ENCODE measurements at regions of chr14 and their contacts with region 1.

Region 1: GRCh38 chr14:98685725-98686124 is 586.3 kb downstream of the BCL11B start:
- DNase-seq: no peak
- H3K4me3 ChIP-seq: no peak overlapping the region
- H3K27ac ChIP-seq: no peak overlapping the region
- H3K4me1 ChIP-seq: peaks cover 0 to 9% (median 0%) of the 10 kb centered on the region in 4 donors
- H3K27me3 ChIP-seq: no peaks in the 10 kb centered on the region
- CTCF ChIP-seq: no peak
- EP300 ChIP-seq: no peak
- POLR2A ChIP-seq: no peak

Region 2: GRCh38 chr14:98608071-98609060 is 77.4 kb before region 1 on chr14:
- intact Hi-C with region 1: no loop called
- DNase-seq: no peak
- H3K4me3 ChIP-seq: no peak overlapping the region
- H3K27ac ChIP-seq: no peak overlapping the region
- H3K4me1 ChIP-seq: no peaks in the 10 kb centered on the region
- H3K27me3 ChIP-seq: no peaks in the 10 kb centered on the region
- CTCF ChIP-seq: no peak
- EP300 ChIP-seq: no peak
- POLR2A ChIP-seq: no peak

Region 3: GRCh38 chr14:98622208-98623051 is 63.3 kb before region 1 on chr14:
- intact Hi-C with region 1: no loop called
- DNase-seq: no peak
- H3K4me3 ChIP-seq: no peak overlapping the region
- H3K27ac ChIP-seq: no peak overlapping the region
- H3K4me1 ChIP-seq: no peaks in the 10 kb centered on the region
- H3K27me3 ChIP-seq: no peaks in the 10 kb centered on the region
- CTCF ChIP-seq: no peak
- EP300 ChIP-seq: no peak
- POLR2A ChIP-seq: no peak

Region 4: GRCh38 chr14:98721061-98721460 is 35.3 kb after region 1 on chr14:
- intact Hi-C with region 1: loop called (anchors 2 kb)
- DNase-seq: no peak
- H3K4me3 ChIP-seq: no peak overlapping the region
- H3K27ac ChIP-seq: no peak overlapping the region
- H3K4me1 ChIP-seq: no peaks in the 10 kb centered on the region
- H3K27me3 ChIP-seq: no peaks in the 10 kb centered on the region
- CTCF ChIP-seq: no peak
- EP300 ChIP-seq: no peak
- POLR2A ChIP-seq: no peak

Measured in sigmoid colon (tissue), 7 donors.